Right ventricle myocardium inferior (tissue), 1 donor: ENCODE measurements at regions of chr6 and their contacts with region 1.

Region 1: GRCh38 chr6:41602864-41603608 is 35.2 kb upstream of the MDFI start:
- DNase-seq: peak; percentile 85
- ATAC-seq: peak; percentile 77

Region 2: DNA sequence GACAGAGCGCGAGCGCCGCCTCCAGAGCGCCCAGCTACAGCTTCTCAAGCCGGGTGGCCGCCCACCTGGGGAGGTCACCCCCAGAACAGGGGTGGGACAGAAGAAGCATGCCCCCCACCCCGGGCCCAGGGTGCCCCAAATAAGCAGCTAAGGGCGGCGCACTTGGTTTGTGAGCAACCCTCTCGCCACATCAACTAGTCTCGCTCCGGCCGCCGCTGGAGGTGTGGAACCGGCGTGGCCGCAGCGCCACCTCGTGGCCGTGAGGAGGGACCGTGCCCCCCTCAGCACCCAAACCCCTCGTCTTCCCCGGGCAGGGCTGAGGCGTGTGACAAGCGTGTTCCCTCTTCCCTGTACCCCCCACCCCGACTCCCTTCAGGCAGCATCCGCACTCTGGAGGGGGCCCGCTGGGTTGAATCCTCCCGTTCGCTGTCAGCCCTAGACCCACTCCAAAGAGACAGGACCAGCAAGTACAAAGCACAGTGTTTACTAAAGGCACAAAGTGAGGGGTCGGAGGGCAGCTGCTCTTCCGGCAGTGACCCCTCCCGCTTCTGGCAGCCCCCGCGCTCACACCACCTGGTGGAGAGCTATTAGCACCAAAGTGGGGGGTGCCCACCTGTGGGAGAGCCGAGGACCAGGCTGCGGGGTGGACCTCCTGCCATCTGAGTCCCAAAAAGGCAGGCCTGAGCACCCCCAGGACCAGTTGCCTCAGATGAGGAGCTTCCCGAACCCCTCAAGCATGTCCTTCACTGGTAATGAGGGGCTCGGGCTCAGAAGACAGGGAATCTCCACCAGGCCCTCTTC is 80.7 kb after region 1 on chr6:
- intact Hi-C with region 1: loop called (anchors 1 kb)
- DNase-seq: peak; percentile 93
- ATAC-seq: peak; percentile 82